ENCODE measurements at regions of chr11 and their contacts with region 1.

Region 1: DNA sequence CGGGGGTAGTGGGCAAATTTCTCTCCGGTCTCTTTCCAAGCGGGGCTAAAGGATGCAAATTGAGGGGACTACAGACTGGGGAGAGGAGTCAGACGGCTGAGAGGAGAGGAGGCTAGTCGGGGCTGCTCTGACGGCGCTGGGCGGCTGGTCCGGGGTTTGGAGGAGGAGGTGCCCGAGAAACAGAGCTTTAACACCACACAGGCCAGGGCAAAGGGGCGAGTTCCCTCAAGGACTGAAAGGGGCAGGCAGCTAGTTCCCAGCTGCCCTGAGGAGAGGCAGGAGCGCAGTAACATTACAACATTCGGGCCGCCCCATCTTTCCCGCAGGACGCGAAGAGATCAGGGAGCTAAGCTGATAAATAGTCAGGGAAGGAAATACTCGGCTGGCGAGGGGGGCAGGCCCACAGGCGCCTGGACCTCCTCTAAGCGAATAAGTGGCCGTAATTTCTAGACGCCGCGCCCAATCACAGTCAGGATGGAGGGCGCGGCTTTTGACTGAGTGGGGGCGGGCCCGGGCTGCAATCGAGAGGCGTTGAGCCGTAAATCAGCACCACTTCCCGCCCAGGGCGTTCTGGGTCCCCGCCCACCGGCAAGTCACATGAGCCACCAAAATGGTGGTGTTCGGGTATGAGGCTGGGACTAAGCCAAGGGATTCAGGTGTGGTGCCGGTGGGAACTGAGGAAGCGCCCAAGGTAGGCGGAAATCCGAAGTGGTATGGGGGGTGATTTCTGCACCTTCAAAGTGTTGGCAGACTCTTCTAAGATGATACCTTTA is at the start of gene TMEM126B:
- DNase-seq: peak; percentile 94 to 99
- H3K4me3 ChIP-seq: peak within 1 kb of the TSS; percentile 51 to 88
- H3K27ac ChIP-seq: peak within 1 kb of the TSS; percentile 92 to 97
- H3K4me1 ChIP-seq: peaks cover 0 to 6% of the 10 kb centered on the region in 2 donors
- H3K27me3 ChIP-seq: no peaks in the 10 kb centered on the region
- CTCF ChIP-seq: no peak
- total RNA-seq, gene TMEM126B: 76.4 TPM

Region 2: DNA sequence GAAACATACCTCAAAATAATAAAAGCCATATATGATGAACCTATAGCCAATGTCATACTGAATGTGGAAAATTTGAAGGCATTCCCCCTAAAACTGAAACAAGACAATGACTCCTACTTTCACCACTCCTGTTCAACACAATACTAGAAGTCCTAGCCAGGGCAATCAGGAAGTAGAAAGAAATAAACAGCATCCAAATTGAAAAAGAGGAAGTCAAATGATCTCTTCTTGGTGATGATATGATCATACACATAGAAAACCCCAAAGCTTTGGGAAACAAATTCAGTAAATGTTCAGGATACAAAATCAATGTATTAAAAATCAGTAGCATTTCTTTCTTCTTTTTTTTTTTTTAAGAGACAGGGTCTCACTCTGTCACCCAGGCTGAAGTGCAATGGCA is 110.9 kb before region 1 on chr11:
- intact Hi-C with region 1: no loop called
- DNase-seq: no peak
- H3K4me3 ChIP-seq: no peak overlapping the region
- H3K27ac ChIP-seq: no peak overlapping the region
- H3K4me1 ChIP-seq: no peaks in the 10 kb centered on the region
- H3K27me3 ChIP-seq: no peaks in the 10 kb centered on the region
- CTCF ChIP-seq: no peak

Region 3: DNA sequence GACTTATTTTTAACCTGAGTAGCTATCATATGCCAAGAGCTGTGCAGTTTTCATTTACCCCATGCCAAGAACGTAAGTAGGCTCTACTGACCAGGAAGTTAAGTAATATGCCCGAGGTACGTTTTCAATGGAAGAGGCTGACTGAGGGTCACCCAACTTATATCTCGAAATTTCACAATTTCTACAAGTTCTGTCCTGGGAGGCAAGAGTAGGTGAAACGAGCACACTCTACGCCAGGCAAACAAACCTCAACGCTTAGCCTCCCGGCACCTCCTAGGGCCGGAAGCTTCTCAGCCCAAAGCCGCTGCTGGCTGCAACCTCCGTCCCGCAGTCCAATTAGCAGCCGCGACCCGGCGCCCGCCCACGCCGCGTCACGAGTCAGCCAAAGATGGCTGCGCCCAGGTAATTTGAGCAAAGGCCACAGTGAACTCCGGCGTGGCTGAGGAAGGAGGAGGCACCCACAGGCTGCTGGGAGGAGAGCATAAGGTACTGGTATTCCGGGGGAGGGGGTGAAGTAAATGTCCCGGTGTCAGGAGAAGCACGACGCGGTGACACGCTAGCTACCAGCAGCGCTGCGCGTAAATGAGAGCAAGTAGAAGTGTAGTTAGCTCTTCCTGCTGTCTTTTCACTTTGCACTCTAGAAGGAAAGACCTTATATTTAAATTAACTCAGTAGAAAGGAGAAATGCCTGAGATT is 19.6 kb after region 1 on chr11 and contains the start of gene TMEM126A:
- intact Hi-C with region 1: loop called (anchors 1 kb)
- DNase-seq: peak; percentile 64 to 95
- H3K4me3 ChIP-seq: peak within 1 kb of the TSS; percentile 61 to 84
- H3K27ac ChIP-seq: peak within 1 kb of the TSS; percentile 81 to 86
- H3K4me1 ChIP-seq: peaks cover 3 to 7% of the 10 kb centered on the region in 2 donors
- H3K27me3 ChIP-seq: no peaks in the 10 kb centered on the region
- CTCF ChIP-seq: no peak
- total RNA-seq, gene TMEM126A: 6.8 TPM

Region 4: GRCh38 chr11:85682330-85683305 is 54.4 kb after region 1 on chr11:
- intact Hi-C with region 1: loop called (anchors 1 kb)
- DNase-seq: peak in 1 of 2 donors; percentile 71
- H3K4me3 ChIP-seq: peak overlapping the region; percentile 58 to 74
- H3K27ac ChIP-seq: no peak overlapping the region
- H3K4me1 ChIP-seq: peaks cover 5 to 6% of the 10 kb centered on the region in 2 donors
- H3K27me3 ChIP-seq: no peaks in the 10 kb centered on the region
- CTCF ChIP-seq: no peak

Measured in ascending aorta (tissue), 2 donors.